Esophagus muscularis mucosa (tissue), 4 donors: ENCODE measurements at regions of chr2 and their contacts with region 1.

Region 1: GRCh38 chr2:16756831-16757644 is 91.4 kb upstream of the CYRIA start:
- DNase-seq: no peak
- H3K4me3 ChIP-seq: no peak overlapping the region
- H3K27ac ChIP-seq: peak overlapping the region in 1 of 4 donors; percentile 32
- H3K4me1 ChIP-seq: peaks cover 6 to 14% (median 9%) of the 10 kb centered on the region in 4 donors
- H3K27me3 ChIP-seq: no peaks in the 10 kb centered on the region
- CTCF ChIP-seq: peak; percentile 85 to 92 (median 87)
- EP300 ChIP-seq: no peak
- POLR2A ChIP-seq: no peak

Region 2: GRCh38 chr2:16553226-16553625 is 203.8 kb before region 1 on chr2:
- intact Hi-C with region 1: loop called (anchors 5 kb)
- DNase-seq: no peak
- H3K4me3 ChIP-seq: no peak overlapping the region
- H3K27ac ChIP-seq: no peak overlapping the region
- H3K4me1 ChIP-seq: no peaks in the 10 kb centered on the region
- H3K27me3 ChIP-seq: no peaks in the 10 kb centered on the region
- CTCF ChIP-seq: peak; percentile 45 to 57 (median 45)
- EP300 ChIP-seq: no peak
- POLR2A ChIP-seq: no peak

Region 3: DNA sequence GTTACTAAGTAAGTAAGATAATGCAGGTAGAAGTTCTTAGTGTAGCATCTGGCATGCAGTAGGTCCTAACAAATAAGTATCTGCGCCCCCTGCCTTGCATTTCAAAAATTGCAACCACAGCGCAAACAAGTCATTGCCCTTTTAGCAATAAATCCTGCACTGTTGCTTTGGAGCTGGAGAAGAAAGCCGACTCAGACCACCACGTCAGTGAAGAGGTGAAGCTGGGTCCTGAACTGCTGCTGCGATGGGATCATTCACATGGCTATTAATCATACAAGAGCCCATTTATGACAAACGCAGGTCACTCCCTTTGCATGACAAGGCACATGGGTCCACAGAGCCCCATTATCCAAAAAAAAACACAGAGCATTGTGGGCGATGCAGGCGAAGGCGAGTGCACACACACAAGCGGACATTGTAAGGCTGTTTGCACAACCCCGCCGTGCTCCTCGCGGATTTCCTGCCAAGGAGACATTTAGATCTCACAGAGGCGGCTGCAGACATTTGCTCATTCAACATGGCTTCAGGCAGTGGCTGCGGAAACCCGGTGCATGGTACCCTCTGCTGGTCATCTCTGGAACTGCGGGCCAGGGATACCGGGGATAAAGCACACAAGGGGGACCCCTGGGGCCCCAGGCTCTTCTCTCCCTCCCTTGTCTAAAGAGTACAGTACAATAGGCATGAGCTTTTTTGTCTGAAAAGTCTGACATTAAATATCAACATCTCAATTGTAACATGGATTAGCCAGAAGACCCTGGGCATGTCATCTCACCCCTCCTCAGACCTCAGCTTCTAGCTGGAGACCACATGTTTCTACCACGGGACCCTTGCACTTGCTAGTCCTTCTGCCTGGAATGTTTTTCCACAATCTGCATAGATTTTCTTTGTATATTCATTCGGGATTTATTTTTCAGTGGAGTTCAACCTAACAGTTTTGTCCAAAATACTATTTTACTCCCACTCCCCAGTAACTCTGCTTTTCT is 148.1 kb before region 1 on chr2:
- intact Hi-C with region 1: loop called (anchors 2 kb)
- DNase-seq: peak; percentile 97
- H3K4me3 ChIP-seq: peak overlapping the region; percentile 41 to 52 (median 48)
- H3K27ac ChIP-seq: peak overlapping the region in 1 of 4 donors; percentile 15
- H3K4me1 ChIP-seq: peaks cover 7 to 25% (median 17%) of the 10 kb centered on the region in 4 donors
- H3K27me3 ChIP-seq: no peaks in the 10 kb centered on the region
- CTCF ChIP-seq: peak; percentile 84 to 94 (median 92)
- EP300 ChIP-seq: no peak
- POLR2A ChIP-seq: no peak